PC-3 (cell line): ENCODE measurements at regions of chr1 and their contacts with region 1.

Region 1: GRCh38 chr1:37595440-37596319 is at the start of gene GNL2:
- DNase-seq: peak; percentile 97
- ATAC-seq: peak; percentile 98
- H3K4me3 ChIP-seq: peak within 1 kb of the TSS; percentile 96
- H3K27ac ChIP-seq: peak within 1 kb of the TSS; percentile 71
- H3K4me1 ChIP-seq: peaks cover 15% of the 10 kb centered on the region
- H3K27me3 ChIP-seq: no peaks in the 10 kb centered on the region
- CTCF ChIP-seq: no peak
- total RNA-seq, gene GNL2: 93.4 and 110 TPM in 2 replicates

Region 2: GRCh38 chr1:37574834-37575480 is 20.7 kb before region 1 on chr1:
- CTCF ChIA-PET with region 1: no interaction called
- POLR2A ChIA-PET with region 1: interaction called, 25 read pairs
- intact Hi-C with region 1: loop called (anchors 2 kb)
- DNase-seq: peak; percentile 90
- ATAC-seq: peak; percentile 79
- H3K4me3 ChIP-seq: no peak overlapping the region
- H3K27ac ChIP-seq: peak overlapping the region; percentile 82
- H3K4me1 ChIP-seq: peaks cover 33% of the 10 kb centered on the region
- H3K27me3 ChIP-seq: no peaks in the 10 kb centered on the region
- CTCF ChIP-seq: no peak

Region 3: DNA sequence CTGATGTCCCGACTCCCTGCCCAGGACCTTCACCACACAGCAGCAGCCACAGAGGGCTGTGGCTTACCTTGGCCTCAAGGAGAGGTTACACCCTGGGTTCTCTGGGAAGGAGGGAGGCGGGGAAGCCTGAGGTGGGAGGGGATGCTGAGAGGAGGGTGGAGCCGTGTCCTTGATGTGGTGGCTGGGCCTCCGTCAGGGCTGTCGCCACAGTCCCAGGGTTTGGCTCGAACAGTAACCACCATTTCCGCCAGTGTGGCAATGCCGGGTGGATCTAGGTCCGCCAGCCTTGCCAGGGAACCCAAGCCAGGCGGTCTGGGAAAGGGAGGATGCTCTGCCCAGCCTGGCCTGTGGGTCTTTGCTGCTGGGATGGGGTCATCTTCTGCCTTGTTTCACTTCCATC is 78.2 kb after region 1 on chr1:
- CTCF ChIA-PET with region 1: no interaction called
- POLR2A ChIA-PET with region 1: interaction called, 21 read pairs
- intact Hi-C with region 1: no loop called
- DNase-seq: no peak
- ATAC-seq: no peak
- H3K4me3 ChIP-seq: no peak overlapping the region
- H3K27ac ChIP-seq: no peak overlapping the region
- H3K4me1 ChIP-seq: no peaks in the 10 kb centered on the region
- H3K27me3 ChIP-seq: peaks cover 16% of the 10 kb centered on the region; the same call in 1 of the 2 replicates
- CTCF ChIP-seq: no peak